Caco-2 (cell line): ENCODE measurements at regions of chr5 and their contacts with region 1.

Region 1: GRCh38 chr5:44952376-44952775 is 143.6 kb downstream of the MRPS30 start:
- DNase-seq: peak in 1 of 2 experiments; percentile 45
- H3K4me3 ChIP-seq: no peak overlapping the region
- H3K4me3 Mint-ChIP-seq: no peak overlapping the region
- H3K27ac Mint-ChIP-seq: no peak overlapping the region
- H3K4me1 ChIP-seq: no peaks in the 10 kb centered on the region
- H3K4me1 Mint-ChIP-seq: no peaks in the 10 kb centered on the region
- H3K27me3 ChIP-seq: no peaks in the 10 kb centered on the region
- H3K27me3 Mint-ChIP-seq: no peaks in the 10 kb centered on the region
- CTCF ChIP-seq: peak; percentile 68 to 81

Region 2: GRCh38 chr5:45639038-45639437 is 686.7 kb after region 1 on chr5:
- CTCF ChIA-PET with region 1: no interaction called
- POLR2A ChIA-PET with region 1: no interaction called
- intact Hi-C with region 1: loop called (anchors 2 kb)
- DNase-seq: peak in 1 of 2 experiments; percentile 1
- H3K4me3 ChIP-seq: no peak overlapping the region
- H3K4me3 Mint-ChIP-seq: no peak overlapping the region
- H3K27ac Mint-ChIP-seq: no peak overlapping the region
- H3K4me1 ChIP-seq: no peaks in the 10 kb centered on the region
- H3K4me1 Mint-ChIP-seq: no peaks in the 10 kb centered on the region
- H3K27me3 ChIP-seq: no peaks in the 10 kb centered on the region
- H3K27me3 Mint-ChIP-seq: no peaks in the 10 kb centered on the region
- CTCF ChIP-seq: peak; percentile 28 to 37